Activated B cell treated with CpG ODN at 0.5 μM for 24 hours (primary cell): ENCODE measurements at regions of chr1 and their contacts with region 1.

Region 1: GRCh38 chr1:209755926-209756614 is at the start of gene TRAF3IP3:
- DNase-seq: peak; percentile 41
- ATAC-seq: peak; percentile 91
- H3K4me3 Mint-ChIP-seq: peak within 1 kb of the TSS; percentile 96
- H3K27ac Mint-ChIP-seq: peak within 1 kb of the TSS; percentile 99
- H3K4me1 Mint-ChIP-seq: peaks cover 85% of the 10 kb centered on the region
- H3K27me3 Mint-ChIP-seq: no peaks in the 10 kb centered on the region
- CTCF ChIP-seq: no peak
- total RNA-seq, gene TRAF3IP3: 158 and 166 TPM in 2 replicates

Region 2: GRCh38 chr1:209674957-209675564 is 81.0 kb before region 1 on chr1 and contains the start of gene G0S2:
- CTCF ChIA-PET with region 1: no interaction called
- POLR2A ChIA-PET with region 1: no interaction called
- intact Hi-C with region 1: no loop called
- DNase-seq: peak; percentile 18
- ATAC-seq: peak; percentile 21
- H3K4me3 Mint-ChIP-seq: peak within 1 kb of the TSS; percentile 75
- H3K27ac Mint-ChIP-seq: peak within 1 kb of the TSS; percentile 72
- H3K4me1 Mint-ChIP-seq: peaks cover 37% of the 10 kb centered on the region
- H3K27me3 Mint-ChIP-seq: peaks cover 49% of the 10 kb centered on the region
- CTCF ChIP-seq: no peak
- total RNA-seq, gene G0S2: 2.1 and 2.3 TPM in 2 replicates

Region 3: DNA sequence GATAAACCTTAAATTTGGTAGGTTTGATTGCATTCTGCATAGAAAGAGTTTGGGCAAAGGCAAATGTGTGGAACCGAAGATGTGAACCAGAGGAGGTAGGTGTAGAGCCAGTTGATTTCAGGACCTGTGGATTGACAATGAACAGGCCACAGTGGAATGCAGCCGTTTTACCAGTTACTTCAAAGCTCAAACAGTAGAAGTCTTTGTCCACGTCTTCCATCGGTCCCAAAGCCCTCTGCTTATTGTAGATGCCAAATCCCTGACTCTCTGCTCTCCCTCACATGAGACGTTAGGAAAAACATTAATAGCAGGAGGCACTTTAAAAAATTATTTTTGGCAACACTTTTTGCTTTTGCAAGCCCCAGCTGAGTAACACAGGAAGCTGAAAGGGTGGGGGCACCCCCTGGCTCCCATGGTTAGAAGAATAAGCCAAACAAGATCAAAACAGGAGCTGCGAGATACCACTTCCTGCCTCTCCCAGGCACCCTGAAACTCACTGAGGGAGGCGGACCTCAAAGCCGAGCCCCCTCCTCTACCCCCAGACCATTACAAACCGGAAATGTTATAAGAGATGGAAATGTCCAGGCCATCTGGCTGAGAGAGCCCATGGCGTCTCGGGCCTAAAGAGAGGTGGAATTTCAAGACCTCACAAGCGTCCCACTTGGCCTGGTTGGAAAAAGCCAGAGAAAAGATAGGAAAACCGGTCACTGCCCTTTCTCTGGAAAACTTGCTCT is 13.3 kb after region 1 on chr1:
- CTCF ChIA-PET with region 1: interaction called, 88 read pairs
- POLR2A ChIA-PET with region 1: interaction called, 175 read pairs
- intact Hi-C with region 1: loop called (anchors 1 kb)
- DNase-seq: no peak
- ATAC-seq: peak; percentile 43
- H3K4me3 Mint-ChIP-seq: no peak overlapping the region
- H3K27ac Mint-ChIP-seq: no peak overlapping the region
- H3K4me1 Mint-ChIP-seq: peaks cover 16% of the 10 kb centered on the region
- H3K27me3 Mint-ChIP-seq: no peaks in the 10 kb centered on the region
- CTCF ChIP-seq: no peak

Region 4: DNA sequence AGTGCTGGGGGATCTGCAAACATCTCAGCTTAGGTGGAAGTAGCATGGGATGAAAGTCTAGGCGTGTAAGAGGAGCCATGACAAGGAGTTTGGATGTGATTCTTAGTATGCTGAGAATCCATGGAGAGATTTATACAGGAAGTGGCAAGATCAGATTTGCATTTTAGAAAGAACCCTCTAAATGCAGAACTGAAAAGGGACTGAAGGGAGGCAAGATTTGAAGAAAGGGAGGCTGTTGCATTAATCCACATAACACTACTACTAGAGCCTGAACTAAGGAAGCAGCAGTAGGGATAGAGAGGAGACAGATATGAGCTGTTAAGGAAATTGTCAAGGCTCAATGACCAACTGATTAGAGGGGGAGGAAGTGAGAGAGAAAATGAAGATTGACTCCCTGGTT is 18.5 kb after region 1 on chr1:
- CTCF ChIA-PET with region 1: interaction called, 88 read pairs
- POLR2A ChIA-PET with region 1: interaction called, 175 read pairs
- intact Hi-C with region 1: loop called (anchors 2 kb)
- DNase-seq: no peak
- ATAC-seq: peak; percentile 68
- H3K4me3 Mint-ChIP-seq: peak overlapping the region; percentile 60
- H3K27ac Mint-ChIP-seq: no peak overlapping the region
- H3K4me1 Mint-ChIP-seq: no peaks in the 10 kb centered on the region
- H3K27me3 Mint-ChIP-seq: no peaks in the 10 kb centered on the region
- CTCF ChIP-seq: no peak

Region 5: DNA sequence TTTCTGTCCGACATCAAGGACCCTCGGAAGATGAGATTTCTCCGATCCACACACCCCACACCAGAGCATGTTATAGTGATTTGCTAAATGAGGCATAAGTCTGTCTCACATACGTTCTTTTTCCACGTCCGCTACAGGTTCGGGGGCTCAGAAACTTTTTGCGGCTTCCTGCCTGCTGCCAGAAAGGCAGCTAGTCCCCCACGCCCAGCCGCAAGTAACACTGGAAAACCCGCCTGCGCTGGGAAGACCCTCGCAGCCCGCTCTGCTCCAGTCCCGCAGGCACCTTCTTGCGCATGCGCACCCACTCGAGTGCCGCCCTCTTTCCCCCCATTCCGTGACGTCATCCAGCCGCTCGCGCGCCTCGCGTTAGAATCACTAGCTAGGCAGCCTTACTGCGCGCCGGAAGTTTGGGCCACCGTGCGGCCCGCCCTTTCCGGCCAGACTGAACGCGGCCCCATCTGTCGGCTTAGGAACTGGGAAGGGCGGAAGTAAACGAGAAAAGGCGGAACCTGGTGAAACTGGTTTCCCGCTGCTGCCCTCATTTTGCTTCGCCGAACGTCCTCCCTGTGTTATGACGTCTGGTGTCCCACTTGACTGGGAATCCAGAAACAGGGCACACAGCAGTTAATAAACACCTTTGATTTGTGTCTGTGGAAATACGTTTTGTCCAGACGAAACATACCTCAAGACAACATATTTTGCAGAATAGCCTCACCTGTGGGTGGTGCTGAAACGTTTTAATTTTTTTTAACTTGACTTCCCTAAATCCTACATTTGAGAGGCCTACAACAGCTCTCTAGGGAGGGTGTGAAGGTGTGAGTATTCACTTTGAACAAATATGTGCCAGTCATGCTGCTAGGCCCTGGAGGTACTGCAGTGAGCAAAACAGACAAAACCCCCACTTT is 28.4 kb after region 1 on chr1 and contains the start of gene C1orf74:
- CTCF ChIA-PET with region 1: interaction called, 5 read pairs
- POLR2A ChIA-PET with region 1: interaction called, 34 read pairs
- intact Hi-C with region 1: loop called (anchors 1 kb)
- DNase-seq: peak; percentile 99
- ATAC-seq: peak; percentile 98
- H3K4me3 Mint-ChIP-seq: peak within 1 kb of the TSS; percentile 99
- H3K27ac Mint-ChIP-seq: peak within 1 kb of the TSS; percentile 98
- H3K4me1 Mint-ChIP-seq: peaks cover 20% of the 10 kb centered on the region
- H3K27me3 Mint-ChIP-seq: peaks cover 10% of the 10 kb centered on the region
- CTCF ChIP-seq: no peak
- total RNA-seq, gene C1orf74: 3.7 TPM in 2 replicates